K562 (cell line): ENCODE measurements at regions of chrX and their contacts with region 1.

Region 1: DNA sequence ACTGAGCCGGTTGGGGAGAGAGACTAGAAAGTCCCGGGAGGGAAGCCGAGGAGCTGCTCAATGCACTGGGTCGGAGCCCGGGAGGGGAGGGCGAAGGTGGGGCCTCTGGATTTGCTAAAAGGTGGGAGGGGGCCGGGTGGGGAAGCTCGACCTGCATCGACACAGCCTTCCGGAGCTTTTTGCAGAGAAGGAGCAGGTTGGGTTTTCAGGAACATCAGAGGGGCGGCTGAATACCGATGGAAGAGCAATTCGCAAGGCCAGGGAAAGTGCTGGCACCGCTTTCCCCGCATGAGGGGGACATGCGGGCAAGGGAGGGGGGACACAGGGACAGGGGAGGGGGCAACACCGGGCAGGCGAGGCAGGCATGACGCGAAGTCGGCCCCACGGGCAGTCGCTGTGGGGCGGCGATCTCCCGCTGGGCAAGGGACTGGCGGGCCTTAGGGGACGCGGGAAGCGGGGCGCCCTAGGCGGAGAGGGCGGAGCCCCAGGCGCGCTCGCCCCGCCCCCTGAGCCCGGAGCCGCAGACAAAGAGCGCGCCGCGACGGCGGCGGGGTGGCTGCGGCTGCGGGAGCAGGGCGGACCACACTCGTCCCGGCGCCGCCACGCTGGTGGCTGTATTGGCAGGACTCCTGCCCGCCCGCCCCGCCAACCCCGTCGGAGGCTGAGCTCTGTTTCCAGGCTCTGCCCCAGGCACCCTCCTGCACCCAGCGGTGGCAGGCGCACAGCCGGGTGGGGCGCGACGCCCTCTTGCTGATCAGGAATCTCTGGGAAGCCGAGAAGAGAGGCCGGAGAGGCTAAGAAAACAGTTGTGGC is 11.6 kb downstream of the PDZD4 start:
- DNase-seq: peak; percentile 71 to 91 (median 88)
- ATAC-seq: peak; percentile 95
- H3K4me3 ChIP-seq: peak overlapping the region; percentile 40
- H3K27ac ChIP-seq: no peak overlapping the region
- H3K4me1 ChIP-seq: peaks cover 5 to 18% of the 10 kb centered on the region in 2 experiments; a peak in 4 of 5 replicates
- H3K27me3 ChIP-seq: peaks cover 3 to 11% of the 10 kb centered on the region in 2 experiments; a peak in 3 of 5 replicates
- CTCF ChIP-seq: no peak
- EP300 ChIP-seq: no peak
- POLR2A ChIP-seq: 0 out of 2 replicates have a peak, but pooled peaks have one; percentile 39
- RAD21 ChIP-seq: no peak

Region 2: GRCh38 chrX:153494541-153495361 is 324.0 kb before region 1 on chrX and contains the start of gene BGN:
- CTCF ChIA-PET with region 1: no interaction called
- POLR2A ChIA-PET with region 1: no interaction called
- in situ Hi-C with region 1: loop called (anchors 5 kb)
- intact Hi-C with region 1: no loop called
- DNase-seq: peak; percentile 34 to 48 (median 42)
- ATAC-seq: peak; percentile 78
- H3K4me3 ChIP-seq: no peak within 1 kb of the TSS
- H3K27ac ChIP-seq: no peak within 1 kb of the TSS
- H3K4me1 ChIP-seq: peaks cover 0 to 24% of the 10 kb centered on the region in 2 experiments; a peak in 2 of 5 replicates
- H3K27me3 ChIP-seq: peaks cover 2 to 48% of the 10 kb centered on the region in 2 experiments; a peak in 4 of 5 replicates
- CTCF ChIP-seq: peak; percentile 31 to 59 (median 37); a peak in 4 of 6 replicates
- EP300 ChIP-seq: no peak
- POLR2A ChIP-seq: no peak
- RAD21 ChIP-seq: peak in 1 of 2 experiments; percentile 58; a peak in 2 of 4 replicates
- polyA plus RNA-seq, gene BGN: not detected